Activated T-helper 1 cell treated with anti-CD3 and anti-CD28 coated beads, Interleukin-12 subunit alpha, Interleukin-12 subunit beta, Interleukin-2, Interleukin-4 antibody, amounts not matched to agents 30 ng/mL and 10 ng/mL and 1 ng/mL, durations not matched to agents 14 hours and 24 hours and 36 hours (primary cell): ENCODE measurements at regions of chr15 and their contacts with region 1.

Region 1: GRCh38 chr15:25508369-25509002 is 69.7 kb upstream of the UBE3A start:
- DNase-seq: no peak
- H3K4me3 Mint-ChIP-seq: no peak overlapping the region
- H3K27ac Mint-ChIP-seq: no peak overlapping the region
- H3K4me1 Mint-ChIP-seq: no peaks in the 10 kb centered on the region
- H3K27me3 Mint-ChIP-seq: no peaks in the 10 kb centered on the region

Region 2: DNA sequence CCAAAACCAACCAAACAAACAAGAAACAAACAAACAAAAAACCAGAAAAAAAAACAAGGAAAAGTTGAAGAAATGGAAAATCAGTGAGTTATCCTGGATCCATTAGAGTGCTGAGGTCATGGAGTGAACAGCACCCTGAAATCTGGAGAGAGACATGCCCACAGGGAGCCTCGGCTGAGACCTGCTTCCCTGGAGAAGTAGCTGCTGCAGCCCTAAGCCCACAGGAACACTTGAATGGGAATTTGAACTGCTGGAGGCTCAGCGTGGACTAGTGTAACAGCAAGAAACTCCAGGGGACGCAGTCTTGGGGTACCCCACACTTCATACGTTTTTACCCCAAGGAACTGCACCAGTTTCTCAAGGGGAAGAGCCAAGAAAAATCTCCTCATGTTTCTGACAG is 74.4 kb after region 1 on chr15:
- intact Hi-C with region 1: no loop called
- DNase-seq: no peak
- H3K4me3 Mint-ChIP-seq: no peak overlapping the region
- H3K27ac Mint-ChIP-seq: no peak overlapping the region
- H3K4me1 Mint-ChIP-seq: no peaks in the 10 kb centered on the region
- H3K27me3 Mint-ChIP-seq: peaks cover 4% of the 10 kb centered on the region

Region 3: GRCh38 chr15:26260517-26261133 is 752.1 kb after region 1 on chr15:
- intact Hi-C with region 1: loop called (anchors 2 kb)
- DNase-seq: no peak
- H3K4me3 Mint-ChIP-seq: no peak overlapping the region
- H3K27ac Mint-ChIP-seq: no peak overlapping the region
- H3K4me1 Mint-ChIP-seq: no peaks in the 10 kb centered on the region
- H3K27me3 Mint-ChIP-seq: no peaks in the 10 kb centered on the region